ENCODE measurements at regions of chr9 and their contacts with region 1.

Region 1: DNA sequence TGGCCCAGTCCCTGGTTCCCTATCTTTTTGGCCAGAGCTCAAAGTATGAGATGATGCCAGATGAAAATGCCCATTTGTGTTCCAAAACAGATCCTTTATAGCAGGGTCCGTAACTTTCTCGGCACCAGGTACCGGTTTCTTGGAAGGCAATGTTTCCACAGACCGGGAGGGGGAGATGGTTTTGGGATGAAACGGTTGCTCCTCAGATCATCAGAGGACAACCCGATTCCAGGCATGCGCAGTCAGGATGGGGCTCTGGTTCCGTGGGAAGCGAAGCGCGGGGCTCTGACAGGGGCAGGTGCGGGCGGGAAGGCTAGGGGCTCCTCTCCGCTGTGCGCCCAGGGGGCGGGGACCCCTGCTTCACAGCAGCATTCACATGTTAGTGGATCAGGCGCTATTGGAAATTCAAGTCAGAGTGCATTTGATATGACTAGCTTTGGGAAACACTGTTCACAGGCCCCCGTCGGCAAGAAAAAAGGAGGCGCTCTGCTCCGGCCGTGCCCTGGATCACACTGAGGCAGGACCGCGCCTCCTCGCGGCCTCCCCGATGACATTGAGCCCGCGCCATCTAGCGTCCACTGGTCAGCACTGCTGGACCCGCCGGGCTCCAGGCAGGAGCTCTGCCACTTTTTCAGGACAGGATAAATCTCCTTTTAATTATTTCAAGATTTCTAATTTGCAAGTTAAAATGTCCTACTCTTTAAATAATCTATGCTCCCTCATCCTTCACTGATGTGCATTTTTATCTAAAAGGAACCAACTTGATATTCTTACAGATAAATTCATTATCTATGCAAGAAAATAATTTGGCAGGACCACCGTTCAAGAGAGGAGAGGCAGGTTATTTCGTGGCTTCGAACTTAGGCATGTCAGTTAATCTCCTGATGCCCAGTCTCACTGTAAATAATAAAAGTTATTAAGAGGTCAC is 190.0 kb downstream of the FANCC start:
- DNase-seq: peak; percentile 46
- H3K4me3 ChIP-seq: peak overlapping the region; percentile 50
- H3K27ac ChIP-seq: no peak overlapping the region
- H3K27me3 ChIP-seq: no peaks in the 10 kb centered on the region
- CTCF ChIP-seq: peak; percentile 98

Region 2: DNA sequence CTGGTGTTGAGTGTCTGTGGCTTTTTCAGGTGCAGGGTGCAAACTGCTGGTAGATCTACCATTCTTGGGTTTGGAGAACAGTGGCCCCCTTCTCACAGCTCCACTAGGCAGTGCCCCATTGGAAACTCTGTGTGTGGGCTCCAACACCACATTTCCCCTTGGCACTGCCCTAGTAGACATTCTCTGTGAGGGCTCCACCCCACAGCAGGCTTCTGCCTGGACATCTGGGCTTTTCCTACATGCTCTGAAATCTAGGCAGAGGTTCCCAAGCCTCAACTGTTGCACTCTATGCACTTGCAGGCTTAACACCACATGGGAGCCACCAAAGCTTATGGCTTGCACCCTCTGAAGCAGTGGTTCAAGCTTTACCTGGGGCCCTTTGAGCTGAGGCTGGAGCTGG is 1253.3 kb before region 1 on chr9:
- CTCF ChIA-PET with region 1: no interaction called
- POLR2A ChIA-PET with region 1: no interaction called
- DNase-seq: no peak
- H3K4me3 ChIP-seq: no peak overlapping the region
- H3K27ac ChIP-seq: no peak overlapping the region
- H3K27me3 ChIP-seq: no peaks in the 10 kb centered on the region
- CTCF ChIP-seq: no peak

Region 3: GRCh38 chr9:94783102-94783664 is 344.3 kb before region 1 on chr9:
- CTCF ChIA-PET with region 1: interaction called, 69 read pairs
- POLR2A ChIA-PET with region 1: no interaction called
- DNase-seq: peak; percentile 58
- H3K4me3 ChIP-seq: no peak overlapping the region
- H3K27ac ChIP-seq: peak overlapping the region; percentile 65
- H3K27me3 ChIP-seq: no peaks in the 10 kb centered on the region
- CTCF ChIP-seq: peak; percentile 77

Region 4: DNA sequence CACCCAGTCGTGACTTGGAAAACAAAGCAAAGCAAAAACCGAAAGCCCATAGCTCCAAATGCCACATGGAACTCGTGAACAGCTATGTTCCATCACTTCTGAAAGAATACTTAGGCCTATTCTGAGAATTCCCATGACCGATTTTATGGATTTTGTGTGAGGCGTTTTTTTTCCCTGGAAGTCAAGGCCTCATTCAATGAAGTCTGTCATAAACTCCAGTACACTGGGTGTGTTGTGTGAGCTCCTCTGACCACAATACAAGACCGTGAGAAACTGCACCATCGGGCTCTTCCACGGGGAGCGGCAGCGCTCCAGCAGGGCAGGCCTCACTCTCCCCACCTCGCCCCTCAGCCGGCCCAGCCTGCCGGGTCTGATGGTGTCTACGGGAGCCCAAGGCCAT is 19.5 kb before region 1 on chr9:
- CTCF ChIA-PET with region 1: interaction called, 33 read pairs
- POLR2A ChIA-PET with region 1: no interaction called
- DNase-seq: no peak
- H3K4me3 ChIP-seq: no peak overlapping the region
- H3K27ac ChIP-seq: no peak overlapping the region
- H3K27me3 ChIP-seq: no peaks in the 10 kb centered on the region
- CTCF ChIP-seq: no peak

Region 5: GRCh38 chr9:95143591-95144561 is 16.4 kb after region 1 on chr9:
- CTCF ChIA-PET with region 1: interaction called, 32 read pairs
- POLR2A ChIA-PET with region 1: no interaction called
- DNase-seq: peak; percentile 60
- H3K4me3 ChIP-seq: no peak overlapping the region
- H3K27ac ChIP-seq: peak overlapping the region; percentile 57
- H3K27me3 ChIP-seq: no peaks in the 10 kb centered on the region
- CTCF ChIP-seq: no peak

Region 6: DNA sequence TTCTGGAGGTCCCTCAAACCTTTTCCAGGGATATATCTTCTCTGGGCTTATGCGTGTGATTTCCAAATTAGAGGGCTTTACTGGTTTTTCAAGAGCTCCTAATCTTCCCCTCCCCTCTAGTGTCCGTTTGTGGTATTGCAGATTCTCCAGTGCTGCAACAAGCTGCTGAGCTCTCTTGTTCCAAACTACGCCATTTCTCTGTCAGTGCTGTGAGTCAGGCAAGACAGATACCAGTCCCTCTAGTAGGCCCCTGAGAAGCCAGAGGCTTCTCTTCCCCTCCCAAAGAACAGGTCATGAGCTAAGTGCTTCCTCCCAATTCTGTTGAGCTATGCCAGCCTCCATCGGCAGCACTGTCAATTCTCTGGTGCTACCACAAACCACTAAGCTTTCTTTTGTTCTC is 40.5 kb after region 1 on chr9:
- CTCF ChIA-PET with region 1: interaction called, 31 read pairs
- POLR2A ChIA-PET with region 1: no interaction called
- DNase-seq: peak; percentile 89
- H3K4me3 ChIP-seq: no peak overlapping the region
- H3K27ac ChIP-seq: peak overlapping the region; percentile 57
- H3K27me3 ChIP-seq: no peaks in the 10 kb centered on the region
- CTCF ChIP-seq: peak; percentile 96

Measured in AG04450 (cell line).